ENCODE measurements at regions of chr11 and their contacts with region 1.

Region 1: DNA sequence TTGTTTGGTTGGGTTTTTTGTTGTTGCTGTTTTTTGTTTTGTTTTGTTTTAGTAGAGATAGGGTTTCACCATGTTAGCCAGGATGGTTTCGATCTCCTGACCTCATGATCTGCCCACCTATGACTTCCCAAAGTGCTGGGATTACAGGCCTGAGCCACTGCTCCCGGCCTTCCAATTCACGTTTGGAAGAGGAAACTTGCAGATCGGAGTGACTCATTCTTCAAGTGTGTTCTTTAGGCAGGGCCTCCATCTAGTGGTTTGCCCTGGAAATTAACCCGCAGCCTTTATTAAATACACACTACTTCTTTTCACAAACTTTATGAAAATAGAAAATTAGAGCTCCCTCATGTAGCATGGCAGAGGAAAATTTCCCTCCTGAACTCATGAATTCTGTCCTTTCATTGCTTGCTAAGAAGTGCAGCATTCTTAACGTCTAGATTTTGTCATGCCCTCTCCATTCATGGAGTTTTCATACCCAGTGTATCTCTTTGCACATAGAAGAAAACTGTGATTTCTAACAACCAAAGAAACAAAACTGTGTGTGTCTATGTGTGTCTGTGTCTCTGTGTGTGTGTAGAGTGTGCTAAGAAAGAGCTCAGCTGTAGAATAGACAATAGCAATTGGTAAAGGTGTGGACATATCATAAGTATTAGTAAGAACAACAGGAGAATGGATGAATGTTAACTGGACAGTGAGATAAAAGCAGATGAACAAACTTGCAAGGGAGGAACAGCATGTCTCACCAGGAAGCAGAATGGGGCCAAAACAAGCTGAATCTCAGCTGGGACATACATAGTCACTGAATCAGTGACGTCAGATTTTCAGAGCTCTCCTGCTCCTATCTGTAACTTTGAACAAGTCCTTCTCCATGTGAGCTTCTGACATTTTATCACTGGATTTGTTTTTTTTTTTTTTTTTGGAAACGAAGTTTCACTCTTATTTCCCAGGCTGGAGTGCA is 118.4 kb downstream of the BBOX1 start:
- DNase-seq: peak; percentile 53
- H3K4me3 Mint-ChIP-seq: no peak overlapping the region
- H3K27ac Mint-ChIP-seq: no peak overlapping the region
- H3K4me1 Mint-ChIP-seq: peaks cover 8% of the 10 kb centered on the region
- H3K27me3 Mint-ChIP-seq: peaks cover 23% of the 10 kb centered on the region
- CTCF ChIP-seq: peak; percentile 71

Region 2: GRCh38 chr11:26286472-26287066 is 872.4 kb before region 1 on chr11:
- CTCF ChIA-PET with region 1: no interaction called
- intact Hi-C with region 1: loop called (anchors 5 kb)
- DNase-seq: peak; percentile 27
- H3K4me3 Mint-ChIP-seq: no peak overlapping the region
- H3K27ac Mint-ChIP-seq: no peak overlapping the region
- H3K4me1 Mint-ChIP-seq: peaks cover 10% of the 10 kb centered on the region
- H3K27me3 Mint-ChIP-seq: no peaks in the 10 kb centered on the region
- CTCF ChIP-seq: peak; percentile 45

Region 3: DNA sequence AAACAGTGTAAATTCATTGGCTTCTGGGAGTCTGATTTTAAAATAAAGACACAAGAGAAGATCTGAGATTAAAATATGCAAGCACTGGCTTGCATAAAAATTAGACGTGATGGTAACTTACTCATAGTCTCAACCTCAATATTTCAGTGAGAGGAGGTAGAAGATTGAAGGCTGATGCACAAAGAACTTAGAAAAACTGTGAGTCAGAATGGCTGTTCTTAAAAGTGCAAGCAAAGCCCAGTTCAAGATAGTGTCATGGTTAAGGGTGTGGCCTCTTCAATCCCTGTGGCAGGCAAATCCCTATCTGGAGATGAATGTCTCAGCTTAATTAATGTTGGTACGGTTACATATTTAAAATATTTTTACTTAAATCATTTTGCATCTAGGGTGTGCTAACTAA is 198.7 kb before region 1 on chr11:
- CTCF ChIA-PET with region 1: no interaction called
- intact Hi-C with region 1: no loop called
- DNase-seq: no peak
- H3K4me3 Mint-ChIP-seq: no peak overlapping the region
- H3K27ac Mint-ChIP-seq: no peak overlapping the region
- H3K4me1 Mint-ChIP-seq: no peaks in the 10 kb centered on the region
- H3K27me3 Mint-ChIP-seq: no peaks in the 10 kb centered on the region
- CTCF ChIP-seq: no peak

Region 4: GRCh38 chr11:27370374-27370773 is 211.4 kb after region 1 on chr11:
- CTCF ChIA-PET with region 1: no interaction called
- intact Hi-C with region 1: no loop called
- DNase-seq: no peak
- H3K4me3 Mint-ChIP-seq: no peak overlapping the region
- H3K27ac Mint-ChIP-seq: no peak overlapping the region
- H3K4me1 Mint-ChIP-seq: peaks cover 12% of the 10 kb centered on the region
- H3K27me3 Mint-ChIP-seq: no peaks in the 10 kb centered on the region
- CTCF ChIP-seq: no peak

Region 5: GRCh38 chr11:27949951-27950738 is 791.1 kb after region 1 on chr11:
- CTCF ChIA-PET with region 1: no interaction called
- intact Hi-C with region 1: no loop called
- DNase-seq: no peak
- H3K4me3 Mint-ChIP-seq: no peak overlapping the region
- H3K27ac Mint-ChIP-seq: no peak overlapping the region
- H3K4me1 Mint-ChIP-seq: no peaks in the 10 kb centered on the region
- H3K27me3 Mint-ChIP-seq: no peaks in the 10 kb centered on the region
- CTCF ChIP-seq: no peak